ENCODE measurements at regions of chr1 and their contacts with region 1.

Region 1: GRCh38 chr1:226126824-226127569 is 59.5 kb downstream of the ACBD3 start:
- DNase-seq: no peak
- H3K4me3 ChIP-seq: no peak overlapping the region
- H3K27ac ChIP-seq: peak overlapping the region; percentile 95
- H3K4me1 ChIP-seq: peaks cover 14% of the 10 kb centered on the region
- H3K27me3 ChIP-seq: no peaks in the 10 kb centered on the region
- CTCF ChIP-seq: no peak

Region 2: DNA sequence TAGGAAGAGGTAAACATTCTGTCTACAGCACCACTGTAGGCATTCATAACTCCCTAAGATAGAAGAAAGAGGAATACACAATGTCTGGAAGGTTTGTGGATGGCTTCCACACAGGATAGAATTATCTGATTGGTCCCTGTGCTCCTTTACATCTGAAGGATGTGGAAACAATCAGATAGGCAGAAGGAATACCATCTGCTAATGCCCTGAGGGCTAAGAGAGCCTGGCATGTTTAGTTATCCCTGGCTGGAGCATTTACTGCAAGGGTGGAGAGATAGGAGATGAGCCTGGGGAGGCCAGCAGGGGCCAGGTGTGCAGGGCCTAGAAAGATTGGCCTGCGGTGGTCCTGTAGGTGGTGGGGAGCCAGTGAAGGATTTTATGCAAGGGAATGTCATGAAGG is 68.1 kb after region 1 on chr1:
- intact Hi-C with region 1: loop called (anchors 2 kb)
- DNase-seq: no peak
- H3K4me3 ChIP-seq: no peak overlapping the region
- H3K27ac ChIP-seq: no peak overlapping the region
- H3K4me1 ChIP-seq: no peaks in the 10 kb centered on the region
- H3K27me3 ChIP-seq: no peaks in the 10 kb centered on the region
- CTCF ChIP-seq: no peak